Psoas muscle (tissue), 8 donors: ENCODE measurements at regions of chr7 and their contacts with region 1.

Region 1: DNA sequence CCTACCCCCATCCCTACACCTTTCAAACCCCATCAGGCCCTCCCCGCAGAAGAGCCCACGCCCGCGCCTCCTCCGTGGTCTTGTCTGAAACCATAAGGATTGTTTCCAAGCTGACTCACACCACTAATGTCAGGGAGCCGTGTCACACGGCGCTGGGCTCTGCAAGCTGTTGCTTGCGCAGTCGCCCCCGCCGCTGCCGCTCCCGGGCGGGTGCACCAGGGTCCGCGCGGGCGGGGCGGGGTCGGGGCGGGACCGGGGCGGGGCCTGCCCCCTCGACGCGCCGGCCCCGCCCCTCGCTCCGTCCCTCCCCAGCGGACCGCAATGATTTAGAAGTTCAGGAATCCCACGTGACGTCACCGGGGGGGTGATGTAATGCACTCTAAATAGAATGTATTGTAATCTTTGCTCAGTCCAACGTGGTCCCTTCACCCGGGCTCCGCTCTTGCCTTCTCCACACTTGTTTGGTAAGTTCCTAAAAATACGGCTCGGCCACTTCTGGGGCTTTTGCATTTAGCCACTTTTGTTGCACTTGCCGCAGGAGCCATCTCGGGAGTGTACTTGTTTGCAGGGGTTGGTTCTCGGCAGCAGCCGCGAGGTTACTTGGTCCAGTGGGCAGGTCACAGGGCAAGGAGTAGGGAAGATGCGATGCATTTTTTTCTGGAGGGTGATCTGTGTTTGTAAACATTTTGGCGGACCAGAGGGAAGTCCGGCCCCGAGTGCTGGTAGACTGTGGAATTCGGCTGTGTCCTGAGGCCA is 3.2 kb upstream of the CREB5 start:
- DNase-seq: peak; percentile 96 to 97
- ATAC-seq: peak; percentile 83 to 90 (median 88)
- H3K4me3 ChIP-seq: peak overlapping the region; percentile 84
- H3K27ac ChIP-seq: peak overlapping the region; percentile 95
- H3K4me1 ChIP-seq: peaks cover 14% of the 10 kb centered on the region
- H3K27me3 ChIP-seq: no peaks in the 10 kb centered on the region
- CTCF ChIP-seq: no peak

Region 2: DNA sequence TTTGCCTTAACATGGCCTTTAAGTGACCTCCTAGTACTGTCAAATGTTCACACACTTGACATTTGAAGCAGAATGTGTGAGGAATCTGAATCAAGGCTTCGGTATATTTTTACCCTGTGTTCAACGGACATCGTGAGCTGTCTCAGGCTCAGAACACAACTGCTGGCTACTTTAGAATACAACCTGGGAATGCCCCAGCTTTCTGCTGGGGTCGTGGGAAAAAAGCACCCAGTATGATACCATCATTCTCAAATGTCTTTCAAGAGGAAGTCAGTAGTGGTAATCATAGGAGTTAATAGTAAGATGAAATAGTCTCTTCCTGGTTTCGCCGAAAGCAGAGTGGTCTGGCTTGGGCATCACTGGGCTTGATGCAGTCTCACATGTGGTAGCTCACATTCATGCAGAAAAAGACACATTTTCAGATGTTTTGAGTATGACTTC is 70.4 kb after region 1 on chr7:
- intact Hi-C with region 1: loop called in 1 of 2 experiments (anchors 10 kb)
- DNase-seq: no peak
- ATAC-seq: peak in 2 of 4 donors; percentile 29 to 49
- H3K4me3 ChIP-seq: no peak overlapping the region
- H3K27ac ChIP-seq: no peak overlapping the region
- H3K4me1 ChIP-seq: peaks cover 18% of the 10 kb centered on the region
- H3K27me3 ChIP-seq: no peaks in the 10 kb centered on the region
- CTCF ChIP-seq: no peak

Region 3: GRCh38 chr7:28551331-28551730 is 142.2 kb after region 1 on chr7:
- intact Hi-C with region 1: no loop called
- DNase-seq: no peak
- ATAC-seq: no peak
- H3K4me3 ChIP-seq: no peak overlapping the region
- H3K27ac ChIP-seq: no peak overlapping the region
- H3K4me1 ChIP-seq: no peaks in the 10 kb centered on the region
- H3K27me3 ChIP-seq: no peaks in the 10 kb centered on the region
- CTCF ChIP-seq: no peak

Region 4: GRCh38 chr7:28608731-28609130 is 199.6 kb after region 1 on chr7:
- intact Hi-C with region 1: loop called in 1 of 2 experiments (anchors 5 kb)
- DNase-seq: no peak
- ATAC-seq: peak in 1 of 4 donors; percentile 24
- H3K4me3 ChIP-seq: no peak overlapping the region
- H3K27ac ChIP-seq: no peak overlapping the region
- H3K4me1 ChIP-seq: peaks cover 11% of the 10 kb centered on the region
- H3K27me3 ChIP-seq: no peaks in the 10 kb centered on the region
- CTCF ChIP-seq: no peak

Region 5: GRCh38 chr7:28626624-28627262 is 217.6 kb after region 1 on chr7:
- intact Hi-C with region 1: loop called in 1 of 2 experiments (anchors 5 kb)
- DNase-seq: no peak
- ATAC-seq: no peak
- H3K4me3 ChIP-seq: no peak overlapping the region
- H3K27ac ChIP-seq: peak overlapping the region; percentile 48
- H3K4me1 ChIP-seq: peaks cover 49% of the 10 kb centered on the region
- H3K27me3 ChIP-seq: no peaks in the 10 kb centered on the region
- CTCF ChIP-seq: peak; percentile 66